ENCODE measurements at regions of chr17 and their contacts with region 1.

Region 1: DNA sequence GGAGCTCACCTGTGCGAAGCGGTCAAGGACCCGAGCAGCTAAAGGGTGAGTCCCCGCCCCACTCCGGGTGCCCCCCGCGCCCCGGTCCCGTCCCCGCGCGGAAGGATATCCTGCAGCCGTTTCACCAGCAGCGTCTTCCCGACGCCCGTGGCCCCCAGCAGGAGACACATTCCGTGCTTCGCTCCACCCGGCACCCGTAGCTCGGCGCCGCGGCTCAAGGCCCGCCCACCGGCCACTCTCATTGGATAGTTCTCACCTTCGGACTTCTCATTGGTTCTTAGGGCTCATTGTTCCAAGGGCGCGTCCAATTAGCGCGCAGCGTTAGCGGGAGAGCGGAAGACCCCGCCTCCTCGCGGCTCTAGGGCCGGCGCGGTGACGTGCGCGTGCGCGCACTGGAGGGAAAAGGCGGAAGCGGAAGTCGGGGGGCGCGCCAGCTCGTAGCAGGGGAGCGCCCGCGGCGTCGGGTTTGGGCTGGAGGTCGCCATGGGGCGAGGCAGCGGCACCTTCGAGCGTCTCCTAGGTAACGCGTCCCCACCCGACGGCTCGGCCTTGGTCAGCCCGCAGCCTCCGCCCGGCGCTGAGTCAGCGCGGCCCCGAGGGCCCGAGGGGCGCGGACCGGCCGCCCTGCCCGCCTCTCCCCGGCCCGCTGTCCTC is at the starts of genes ARL16 and HGS:
- DNase-seq: peak; percentile 96
- ATAC-seq: peak; percentile 97
- H3K4me3 Mint-ChIP-seq: peak within 1 kb of the TSS; percentile 95
- H3K27ac Mint-ChIP-seq: peak within 1 kb of the TSS; percentile 91
- H3K4me1 Mint-ChIP-seq: peaks cover 34% of the 10 kb centered on the region
- H3K27me3 Mint-ChIP-seq: no peaks in the 10 kb centered on the region
- CTCF ChIP-seq: no peak
- total RNA-seq, gene ARL16: 30.7 and 33.3 TPM in 2 replicates
- total RNA-seq, gene HGS: 132 and 151 TPM in 2 replicates

Region 2: DNA sequence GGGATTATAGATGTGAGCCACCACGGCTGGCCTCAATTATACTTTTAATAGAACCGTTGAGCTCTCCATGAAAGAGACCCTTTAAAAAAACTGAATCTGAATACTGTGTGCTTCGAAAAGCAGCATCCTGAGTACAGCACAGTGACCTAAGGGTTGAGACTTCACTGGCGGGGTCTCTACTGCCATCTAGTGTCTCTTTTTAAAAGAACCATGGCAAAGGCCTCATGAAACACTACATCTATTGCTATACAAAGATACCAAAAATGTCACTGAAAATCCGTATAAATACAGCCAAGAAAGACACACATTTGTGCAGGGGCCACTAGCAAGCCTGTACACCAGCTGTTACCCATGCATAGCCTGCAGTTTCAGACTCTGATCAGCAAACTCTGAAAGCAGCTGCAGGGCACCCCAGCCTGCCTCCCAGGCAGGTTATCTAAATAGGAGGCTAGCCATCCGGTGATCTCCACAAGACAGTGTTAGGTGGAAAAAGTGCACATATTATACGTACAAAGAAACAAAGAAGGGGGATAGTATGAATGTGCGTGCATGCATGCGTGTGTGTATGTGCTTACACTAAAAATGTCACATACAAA is 82.1 kb before region 1 on chr17:
- CTCF ChIA-PET with region 1: no interaction called
- POLR2A ChIA-PET with region 1: no interaction called
- intact Hi-C with region 1: no loop called
- DNase-seq: no peak
- ATAC-seq: peak; percentile 63
- H3K4me3 Mint-ChIP-seq: no peak overlapping the region
- H3K27ac Mint-ChIP-seq: peak overlapping the region; percentile 57
- H3K4me1 Mint-ChIP-seq: peaks cover 46% of the 10 kb centered on the region
- H3K27me3 Mint-ChIP-seq: no peaks in the 10 kb centered on the region
- CTCF ChIP-seq: peak; percentile 19

Region 3: GRCh38 chr17:81636505-81637288 is 47.0 kb before region 1 on chr17 and contains the starts of genes NPLOC4 and TSPAN10:
- CTCF ChIA-PET with region 1: no interaction called
- POLR2A ChIA-PET with region 1: interaction called, 4 read pairs
- intact Hi-C with region 1: loop called (anchors 1 kb)
- DNase-seq: peak; percentile 85
- ATAC-seq: peak; percentile 89
- H3K4me3 Mint-ChIP-seq: peak within 1 kb of the TSS; percentile 95
- H3K27ac Mint-ChIP-seq: peak within 1 kb of the TSS; percentile 77
- H3K4me1 Mint-ChIP-seq: peaks cover 21% of the 10 kb centered on the region
- H3K27me3 Mint-ChIP-seq: no peaks in the 10 kb centered on the region
- CTCF ChIP-seq: no peak
- total RNA-seq, gene NPLOC4: 96.8 and 132 TPM in 2 replicates
- total RNA-seq, gene TSPAN10: 0.34 and 0.95 TPM in 2 replicates

Region 4: GRCh38 chr17:81702971-81703746 is 19.4 kb after region 1 on chr17 and contains the start of gene MRPL12:
- CTCF ChIA-PET with region 1: interaction called, 5 read pairs
- POLR2A ChIA-PET with region 1: interaction called, 39 read pairs
- intact Hi-C with region 1: loop called (anchors 1 kb)
- DNase-seq: peak; percentile 84
- ATAC-seq: peak; percentile 94
- H3K4me3 Mint-ChIP-seq: peak within 1 kb of the TSS; percentile 89
- H3K27ac Mint-ChIP-seq: peak within 1 kb of the TSS; percentile 86
- H3K4me1 Mint-ChIP-seq: peaks cover 38% of the 10 kb centered on the region
- H3K27me3 Mint-ChIP-seq: no peaks in the 10 kb centered on the region
- CTCF ChIP-seq: no peak
- total RNA-seq, gene MRPL12: 68.8 and 69.8 TPM in 2 replicates

Region 5: GRCh38 chr17:82283208-82283749 is 599.6 kb after region 1 on chr17:
- CTCF ChIA-PET with region 1: no interaction called
- POLR2A ChIA-PET with region 1: no interaction called
- intact Hi-C with region 1: no loop called
- DNase-seq: no peak
- ATAC-seq: no peak
- H3K4me3 Mint-ChIP-seq: no peak overlapping the region
- H3K27ac Mint-ChIP-seq: no peak overlapping the region
- H3K4me1 Mint-ChIP-seq: peaks cover 8% of the 10 kb centered on the region
- H3K27me3 Mint-ChIP-seq: peaks cover 2% of the 10 kb centered on the region
- CTCF ChIP-seq: no peak

Region 6: GRCh38 chr17:82457997-82458864 is 774.5 kb after region 1 on chr17 and contains the start of gene NARF:
- CTCF ChIA-PET with region 1: no interaction called
- POLR2A ChIA-PET with region 1: no interaction called
- intact Hi-C with region 1: loop called (anchors 5 kb)
- DNase-seq: peak; percentile 95
- ATAC-seq: peak; percentile 96
- H3K4me3 Mint-ChIP-seq: peak within 1 kb of the TSS; percentile 88
- H3K27ac Mint-ChIP-seq: peak within 1 kb of the TSS; percentile 96
- H3K4me1 Mint-ChIP-seq: peaks cover 19% of the 10 kb centered on the region
- H3K27me3 Mint-ChIP-seq: no peaks in the 10 kb centered on the region
- CTCF ChIP-seq: no peak
- total RNA-seq, gene NARF: 77.8 and 81.9 TPM in 2 replicates

Measured in activated B cell treated with CpG ODN at 0.5 μM for 24 hours (primary cell).